ENCODE measurements at regions of chr3 and their contacts with region 1.

Region 1: GRCh38 chr3:151282921-151283320 is 4.6 kb upstream of the P2RY14 start:
- DNase-seq: peak in 2 of 9 experiments; percentile 73 to 79
- ATAC-seq: peak; percentile 56
- H3K4me3 ChIP-seq: no peak overlapping the region
- H3K4me3 Mint-ChIP-seq: no peak overlapping the region
- H3K27ac ChIP-seq: no peak overlapping the region
- H3K27ac Mint-ChIP-seq: no peak overlapping the region
- H3K4me1 ChIP-seq: peaks cover 10% of the 10 kb centered on the region
- H3K4me1 Mint-ChIP-seq: peaks cover 18% of the 10 kb centered on the region
- H3K27me3 ChIP-seq: no peaks in the 10 kb centered on the region
- H3K27me3 Mint-ChIP-seq: no peaks in the 10 kb centered on the region
- CTCF ChIP-seq: peak; percentile 90

Region 2: GRCh38 chr3:149975919-149976318 is 1307.0 kb before region 1 on chr3:
- CTCF ChIA-PET with region 1: no interaction called
- POLR2A ChIA-PET with region 1: no interaction called
- intact Hi-C with region 1: no loop called
- DNase-seq: peak in 1 of 9 experiments; percentile 14
- ATAC-seq: no peak
- H3K4me3 ChIP-seq: no peak overlapping the region
- H3K4me3 Mint-ChIP-seq: no peak overlapping the region
- H3K27ac ChIP-seq: no peak overlapping the region
- H3K27ac Mint-ChIP-seq: no peak overlapping the region
- H3K4me1 ChIP-seq: peaks cover 4% of the 10 kb centered on the region
- H3K4me1 Mint-ChIP-seq: peaks cover 9% of the 10 kb centered on the region
- H3K27me3 ChIP-seq: peaks cover 0 to 3% of the 10 kb centered on the region in 2 experiments
- H3K27me3 Mint-ChIP-seq: peaks cover 3% of the 10 kb centered on the region
- CTCF ChIP-seq: no peak

Region 3: DNA sequence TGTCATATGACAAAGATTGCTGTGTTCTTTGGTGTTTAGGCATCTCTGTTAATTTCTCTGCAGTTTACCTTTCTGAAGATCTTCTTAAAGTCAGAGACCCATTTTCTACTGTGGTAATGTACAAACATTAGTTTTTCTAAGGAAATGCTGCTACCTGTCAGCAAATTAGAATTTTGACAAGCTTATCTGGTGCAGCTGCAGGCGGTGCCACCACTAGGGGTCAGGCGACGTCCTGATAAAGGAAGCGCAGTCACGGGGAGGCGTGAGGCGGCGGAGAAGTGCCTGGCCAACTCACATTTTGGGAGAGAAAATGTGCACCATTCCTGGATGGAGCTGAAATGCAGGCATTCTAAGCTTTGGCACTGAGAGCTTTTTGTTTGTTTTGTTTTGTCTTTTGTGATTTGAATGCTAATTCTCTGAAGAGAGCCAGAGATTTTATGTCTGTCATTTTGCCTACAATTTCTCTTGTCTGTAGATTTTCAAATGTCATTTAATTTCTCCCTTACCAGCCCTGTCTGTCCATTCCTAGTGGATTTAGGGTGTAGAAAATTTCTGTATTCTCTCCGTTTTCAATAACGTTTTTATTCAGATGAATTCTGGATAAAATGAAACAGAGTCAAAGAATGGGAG is 495.1 kb before region 1 on chr3:
- CTCF ChIA-PET with region 1: no interaction called
- POLR2A ChIA-PET with region 1: no interaction called
- intact Hi-C with region 1: loop called (anchors 10 kb)
- DNase-seq: peak; percentile 52 to 83 (median 80)
- ATAC-seq: peak; percentile 86
- H3K4me3 ChIP-seq: no peak overlapping the region
- H3K4me3 Mint-ChIP-seq: no peak overlapping the region
- H3K27ac ChIP-seq: no peak overlapping the region
- H3K27ac Mint-ChIP-seq: no peak overlapping the region
- H3K4me1 ChIP-seq: no peaks in the 10 kb centered on the region
- H3K4me1 Mint-ChIP-seq: peaks cover 3% of the 10 kb centered on the region
- H3K27me3 ChIP-seq: no peaks in the 10 kb centered on the region
- H3K27me3 Mint-ChIP-seq: peaks cover 3% of the 10 kb centered on the region
- CTCF ChIP-seq: peak; percentile 98

Region 4: DNA sequence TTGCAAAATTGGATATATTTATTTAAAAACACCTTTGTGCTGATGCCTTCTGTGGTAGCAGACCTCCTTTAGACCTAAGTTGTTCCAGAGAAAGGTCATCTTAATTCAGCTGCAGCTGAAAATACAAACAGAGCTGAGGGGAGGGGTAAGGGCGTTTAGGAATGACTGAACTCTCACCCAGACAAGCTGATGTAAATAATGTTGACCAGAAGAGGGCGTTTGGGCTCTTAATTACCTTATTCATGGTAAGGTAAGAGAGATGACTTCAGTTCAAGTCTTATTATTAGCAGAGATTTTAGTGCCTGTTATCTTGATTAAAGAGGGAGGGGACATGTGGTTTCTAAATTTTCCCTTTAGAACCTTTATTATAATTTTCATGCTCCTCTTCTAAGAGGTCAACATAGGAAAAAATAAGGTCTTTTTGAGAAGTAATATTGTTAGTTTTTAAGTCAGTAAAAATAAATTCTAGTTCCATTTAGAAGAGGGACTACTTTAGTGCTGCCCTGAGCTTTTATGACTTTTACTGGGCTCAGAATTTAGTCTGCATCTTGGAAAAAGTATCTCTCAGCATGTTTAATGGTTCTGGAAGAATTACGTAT is 126.2 kb before region 1 on chr3:
- CTCF ChIA-PET with region 1: interaction called, 18 read pairs
- POLR2A ChIA-PET with region 1: no interaction called
- intact Hi-C with region 1: loop called in 1 of 2 experiments (anchors 2 kb)
- DNase-seq: peak in 3 of 9 experiments; percentile 34 to 73 (median 65)
- ATAC-seq: peak; percentile 69
- H3K4me3 ChIP-seq: no peak overlapping the region
- H3K4me3 Mint-ChIP-seq: no peak overlapping the region
- H3K27ac ChIP-seq: no peak overlapping the region
- H3K27ac Mint-ChIP-seq: no peak overlapping the region
- H3K4me1 ChIP-seq: no peaks in the 10 kb centered on the region
- H3K4me1 Mint-ChIP-seq: no peaks in the 10 kb centered on the region
- H3K27me3 ChIP-seq: no peaks in the 10 kb centered on the region
- H3K27me3 Mint-ChIP-seq: peaks cover 5% of the 10 kb centered on the region
- CTCF ChIP-seq: peak; percentile 78

Region 5: GRCh38 chr3:151234825-151235224 is 48.1 kb before region 1 on chr3:
- CTCF ChIA-PET with region 1: interaction called, 226 read pairs
- POLR2A ChIA-PET with region 1: interaction called, 4 read pairs
- intact Hi-C with region 1: no loop called
- DNase-seq: peak in 1 of 9 experiments; percentile 5
- ATAC-seq: no peak
- H3K4me3 ChIP-seq: no peak overlapping the region
- H3K4me3 Mint-ChIP-seq: no peak overlapping the region
- H3K27ac ChIP-seq: no peak overlapping the region
- H3K27ac Mint-ChIP-seq: no peak overlapping the region
- H3K4me1 ChIP-seq: no peaks in the 10 kb centered on the region
- H3K4me1 Mint-ChIP-seq: peaks cover 12% of the 10 kb centered on the region
- H3K27me3 ChIP-seq: no peaks in the 10 kb centered on the region
- H3K27me3 Mint-ChIP-seq: no peaks in the 10 kb centered on the region
- CTCF ChIP-seq: no peak

Region 6: DNA sequence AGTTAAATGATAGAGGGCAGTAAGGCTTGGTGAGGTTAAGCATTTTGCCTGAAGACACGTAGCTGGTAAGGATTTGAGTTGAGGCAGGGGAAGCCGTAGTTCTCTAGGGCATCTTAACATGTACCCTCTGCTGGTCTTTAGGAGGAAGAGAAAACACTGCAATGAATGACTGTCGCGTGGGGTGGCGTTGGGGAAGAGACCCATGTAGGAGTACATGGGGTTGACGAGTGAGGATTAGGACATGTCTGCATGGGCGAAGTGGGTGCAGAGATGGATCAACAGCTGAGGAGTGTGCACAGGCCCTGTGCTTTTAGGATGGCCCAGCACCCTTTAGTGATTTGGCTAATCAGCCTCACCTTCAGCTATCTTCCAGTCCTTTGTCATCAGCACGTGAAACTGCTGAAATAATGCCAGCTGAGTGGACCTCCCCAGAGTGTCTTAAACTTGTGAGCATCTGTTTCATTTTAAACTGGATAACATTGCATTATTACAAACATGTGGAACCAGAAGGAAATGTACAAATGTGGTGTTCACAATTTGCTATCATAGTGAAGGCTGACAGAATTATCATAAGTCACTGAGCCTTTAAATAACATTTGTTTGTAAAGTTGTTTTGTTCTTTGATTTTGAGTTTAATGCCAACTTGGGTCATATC is 19.9 kb before region 1 on chr3:
- CTCF ChIA-PET with region 1: interaction called, 13 read pairs
- POLR2A ChIA-PET with region 1: interaction called, 4 read pairs
- intact Hi-C with region 1: loop called in 1 of 2 experiments (anchors 1 kb)
- DNase-seq: no peak
- ATAC-seq: no peak
- H3K4me3 ChIP-seq: no peak overlapping the region
- H3K4me3 Mint-ChIP-seq: no peak overlapping the region
- H3K27ac ChIP-seq: no peak overlapping the region
- H3K27ac Mint-ChIP-seq: no peak overlapping the region
- H3K4me1 ChIP-seq: no peaks in the 10 kb centered on the region
- H3K4me1 Mint-ChIP-seq: peaks cover 2% of the 10 kb centered on the region
- H3K27me3 ChIP-seq: no peaks in the 10 kb centered on the region
- H3K27me3 Mint-ChIP-seq: no peaks in the 10 kb centered on the region
- CTCF ChIP-seq: no peak

Region 7: DNA sequence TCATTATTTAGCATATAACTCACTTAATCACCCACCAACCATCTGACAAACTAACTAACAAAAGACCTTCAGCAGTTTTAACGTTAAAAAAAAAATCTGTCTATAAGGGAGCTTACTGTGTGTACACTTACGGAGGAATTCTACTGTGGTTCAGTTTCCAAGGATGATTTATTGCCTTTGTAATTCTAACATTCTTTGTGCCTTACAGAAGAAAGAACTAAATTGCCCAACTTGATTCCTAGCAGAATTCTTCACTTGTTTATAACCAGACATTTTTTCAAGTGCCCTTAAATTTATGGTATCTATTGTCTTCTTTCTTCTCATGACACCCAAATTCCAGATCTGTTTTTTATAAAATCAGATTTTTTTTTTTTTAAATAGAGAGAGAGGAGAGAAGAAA is 297.7 kb after region 1 on chr3:
- CTCF ChIA-PET with region 1: no interaction called
- POLR2A ChIA-PET with region 1: no interaction called
- intact Hi-C with region 1: no loop called
- DNase-seq: no peak
- ATAC-seq: no peak
- H3K4me3 ChIP-seq: no peak overlapping the region
- H3K4me3 Mint-ChIP-seq: no peak overlapping the region
- H3K27ac ChIP-seq: no peak overlapping the region
- H3K27ac Mint-ChIP-seq: no peak overlapping the region
- H3K4me1 ChIP-seq: no peaks in the 10 kb centered on the region
- H3K4me1 Mint-ChIP-seq: no peaks in the 10 kb centered on the region
- H3K27me3 ChIP-seq: no peaks in the 10 kb centered on the region
- H3K27me3 Mint-ChIP-seq: peaks cover 2% of the 10 kb centered on the region
- CTCF ChIP-seq: no peak